Posterior vena cava (tissue), 2 donors: ENCODE measurements at regions of chr20 and their contacts with region 1.

Region 1: DNA sequence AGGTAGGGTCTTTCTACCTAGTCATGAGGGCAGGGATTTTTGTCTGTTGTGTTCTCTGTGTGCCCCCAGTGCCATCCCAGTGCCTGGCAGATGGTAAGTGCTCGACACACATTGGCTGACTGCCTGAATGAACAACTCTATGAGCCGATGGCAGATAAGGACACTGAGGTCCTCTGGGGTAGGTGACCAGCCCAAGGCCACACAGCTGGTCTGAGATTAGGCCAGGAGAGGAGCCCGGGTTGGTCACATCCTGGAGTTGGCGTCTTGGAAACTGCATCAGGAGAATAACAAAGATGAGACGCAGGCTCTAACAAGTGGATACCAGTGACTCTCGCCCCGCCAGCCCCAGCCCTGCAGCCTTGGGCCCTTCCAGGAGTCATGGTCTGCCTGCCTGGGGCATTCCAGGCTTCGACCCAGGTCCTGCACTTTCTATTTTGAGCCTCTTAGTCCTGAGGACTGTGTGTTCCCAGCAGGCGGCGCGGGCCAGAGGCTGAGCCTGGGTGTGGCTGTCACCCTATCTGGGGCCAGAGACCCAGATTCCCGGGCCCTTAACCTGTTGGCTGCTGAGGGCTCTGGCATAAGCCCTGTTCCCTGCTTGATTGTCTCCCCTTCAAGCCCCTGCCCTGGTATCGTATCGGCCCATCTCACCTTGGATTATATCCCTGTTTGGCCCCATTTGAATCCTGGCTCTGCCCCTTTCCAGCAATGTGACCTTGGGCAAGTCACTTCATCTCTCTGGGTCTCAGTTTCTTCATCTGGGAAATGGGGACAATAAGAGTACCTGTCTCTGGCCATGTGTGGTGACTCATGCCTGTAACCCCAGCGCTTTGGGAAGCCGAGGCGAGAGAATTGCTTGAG is 88.3 kb downstream of the CEBPB start:
- DNase-seq: peak; percentile 93

Region 2: GRCh38 chr20:50224531-50225255 is 54.2 kb before region 1 on chr20:
- intact Hi-C with region 1: loop called in 1 of 2 experiments (anchors 10 kb)
- DNase-seq: peak; percentile 95

Region 3: DNA sequence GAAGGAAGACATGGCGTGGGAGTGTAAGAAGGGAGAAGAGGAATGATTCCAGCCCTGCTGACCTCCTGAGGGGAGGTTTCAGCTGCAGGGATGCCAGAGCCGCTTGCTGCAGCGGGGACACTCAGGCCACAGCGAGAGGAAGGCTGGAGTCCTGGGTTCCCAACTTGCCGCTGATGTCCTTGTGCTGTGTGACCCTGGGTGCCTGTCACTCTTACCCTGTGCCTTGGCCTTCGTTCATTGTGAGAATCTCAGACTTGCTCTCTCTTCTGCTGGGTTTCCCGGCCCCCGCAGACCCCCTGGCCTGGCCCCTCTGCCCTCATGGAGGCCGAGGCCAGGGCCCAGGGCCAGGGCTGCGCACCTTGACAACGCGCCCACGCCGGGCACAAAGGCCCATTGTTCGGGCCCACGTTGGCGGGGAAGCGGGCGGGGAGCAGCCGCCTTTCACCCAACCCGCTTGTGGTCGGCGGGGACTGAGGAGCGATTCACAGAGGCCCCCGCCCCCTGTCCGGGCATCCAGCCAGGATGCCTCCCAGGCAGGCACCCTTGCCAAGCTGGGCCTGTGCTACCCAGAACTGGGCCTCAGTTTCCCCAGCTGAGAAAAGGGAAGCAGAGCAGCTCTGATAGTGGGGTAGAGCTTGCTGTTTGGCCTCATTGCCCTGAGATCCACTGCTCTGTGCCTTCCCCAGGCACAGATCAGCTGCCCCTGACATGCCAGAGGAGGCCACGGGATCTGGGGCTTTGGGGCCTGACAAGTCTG is 35.9 kb before region 1 on chr20:
- intact Hi-C with region 1: no loop called
- DNase-seq: no peak

Region 4: DNA sequence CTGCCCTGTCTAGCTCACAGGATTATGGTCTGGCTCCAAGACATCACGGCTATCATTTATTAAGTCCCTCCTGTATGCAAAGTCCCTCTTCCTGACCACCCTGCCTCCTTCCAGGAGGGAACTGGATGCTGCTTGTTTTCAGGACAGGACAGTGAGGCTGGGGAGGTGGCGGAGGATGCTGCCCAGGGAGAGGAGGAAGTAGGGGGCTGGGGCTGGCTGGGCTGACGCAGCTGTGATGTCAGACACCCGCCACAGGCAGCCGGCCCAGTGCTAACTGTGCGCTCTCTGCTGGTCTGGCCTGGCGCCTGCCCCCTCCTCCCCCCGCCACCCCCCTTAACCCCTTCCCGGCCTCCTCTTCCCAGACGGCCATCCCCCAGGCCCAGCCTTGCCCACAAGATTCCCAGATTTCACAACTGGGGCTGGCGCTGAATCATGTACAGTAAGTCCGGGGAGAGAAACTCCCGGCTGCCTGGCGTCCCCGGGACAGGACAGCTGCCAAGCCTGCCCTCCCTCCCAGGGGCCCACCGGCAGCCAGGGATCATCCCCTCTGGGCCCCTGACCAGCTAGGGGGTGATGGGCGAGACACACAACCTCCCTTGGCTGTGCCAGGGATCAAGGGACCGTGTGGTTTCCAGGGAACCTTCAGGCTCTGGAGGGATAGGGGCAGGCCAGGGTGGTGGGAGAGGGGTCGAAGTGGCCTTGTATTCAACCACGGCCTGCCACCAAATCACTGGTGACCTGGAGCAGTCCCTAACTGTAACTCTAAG is 29.8 kb after region 1 on chr20:
- intact Hi-C with region 1: loop called in 1 of 2 experiments (anchors 5 kb)
- DNase-seq: peak; percentile 98

Region 5: DNA sequence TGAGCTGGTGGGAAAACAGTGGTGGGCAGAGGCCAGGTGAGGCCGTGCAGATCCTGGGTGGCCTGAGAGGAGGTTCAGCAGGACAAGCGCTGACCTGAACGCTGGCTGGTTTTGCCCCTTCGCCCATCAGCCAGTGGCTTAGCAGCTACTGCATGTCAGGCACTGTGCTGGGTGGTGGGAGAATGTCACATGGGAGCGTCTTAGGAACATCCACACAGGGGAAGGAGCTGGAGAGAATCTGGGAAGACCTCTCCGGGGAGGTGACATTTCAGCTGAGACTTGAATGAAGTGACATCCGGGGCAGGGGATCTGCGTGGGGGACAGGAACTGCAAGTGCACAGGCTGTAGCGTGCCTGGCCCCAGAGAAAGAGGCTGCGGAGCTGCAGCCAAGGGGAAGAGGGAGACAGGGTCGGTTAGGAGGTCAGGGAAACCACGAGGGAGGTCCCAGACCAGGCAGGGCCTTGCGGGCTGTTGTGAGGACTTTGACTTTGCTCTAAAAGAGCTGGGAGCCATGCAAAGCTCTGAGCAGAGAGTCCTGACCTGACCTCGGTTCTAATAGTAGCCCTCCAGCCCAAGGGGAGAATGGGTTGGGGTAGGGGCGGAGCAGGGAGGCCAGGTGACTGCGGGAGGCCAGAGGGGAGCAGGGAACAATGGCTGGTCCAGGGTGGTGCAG is 74.5 kb after region 1 on chr20:
- intact Hi-C with region 1: no loop called
- DNase-seq: no peak

Region 6: DNA sequence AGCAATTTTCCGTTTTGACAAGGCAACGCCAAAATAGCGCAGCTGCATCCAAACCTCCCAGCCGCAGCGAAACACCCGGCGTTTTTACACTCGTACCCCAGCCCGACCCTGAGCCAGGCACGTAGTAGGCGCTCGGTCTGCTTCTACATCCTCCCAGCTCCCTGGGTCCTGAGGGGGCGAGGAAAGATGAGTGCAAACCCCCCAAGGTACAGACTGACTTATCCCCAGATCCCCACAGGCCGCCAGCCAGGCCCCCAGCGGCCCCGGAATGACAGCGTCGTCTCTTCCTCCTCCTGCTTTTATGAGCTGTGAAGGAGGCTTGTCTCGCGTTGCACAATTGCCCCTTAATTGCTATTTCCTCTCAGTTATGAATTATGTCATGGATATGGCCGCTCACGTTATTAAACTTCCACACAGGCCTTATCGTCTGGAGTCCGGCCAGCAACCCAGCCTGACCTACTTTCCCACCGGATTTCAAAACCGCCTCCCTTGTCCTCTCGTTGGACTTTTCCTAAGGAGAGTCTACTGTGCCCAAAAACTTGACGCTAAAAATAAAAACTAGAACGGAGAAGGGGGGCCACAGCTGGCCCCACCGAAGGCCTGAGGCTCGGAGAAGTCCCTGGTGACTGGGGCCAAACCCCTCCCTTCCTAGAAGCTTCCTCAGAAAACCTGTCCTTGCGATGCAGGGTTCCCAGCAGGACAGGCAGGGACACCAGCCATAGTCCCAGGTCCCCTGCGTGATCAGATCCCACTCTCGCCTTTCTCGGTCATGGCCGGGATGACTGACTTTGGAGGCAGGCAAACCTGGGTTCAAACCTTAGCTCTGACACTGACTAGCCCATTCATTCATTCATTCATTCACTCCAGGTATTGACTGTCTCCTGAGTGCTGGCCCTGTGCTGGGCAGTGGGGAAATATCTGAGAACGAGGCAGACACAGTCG is 100.4 kb after region 1 on chr20:
- intact Hi-C with region 1: loop called in 1 of 2 experiments (anchors 5 kb)
- DNase-seq: peak; percentile 96

Region 7: DNA sequence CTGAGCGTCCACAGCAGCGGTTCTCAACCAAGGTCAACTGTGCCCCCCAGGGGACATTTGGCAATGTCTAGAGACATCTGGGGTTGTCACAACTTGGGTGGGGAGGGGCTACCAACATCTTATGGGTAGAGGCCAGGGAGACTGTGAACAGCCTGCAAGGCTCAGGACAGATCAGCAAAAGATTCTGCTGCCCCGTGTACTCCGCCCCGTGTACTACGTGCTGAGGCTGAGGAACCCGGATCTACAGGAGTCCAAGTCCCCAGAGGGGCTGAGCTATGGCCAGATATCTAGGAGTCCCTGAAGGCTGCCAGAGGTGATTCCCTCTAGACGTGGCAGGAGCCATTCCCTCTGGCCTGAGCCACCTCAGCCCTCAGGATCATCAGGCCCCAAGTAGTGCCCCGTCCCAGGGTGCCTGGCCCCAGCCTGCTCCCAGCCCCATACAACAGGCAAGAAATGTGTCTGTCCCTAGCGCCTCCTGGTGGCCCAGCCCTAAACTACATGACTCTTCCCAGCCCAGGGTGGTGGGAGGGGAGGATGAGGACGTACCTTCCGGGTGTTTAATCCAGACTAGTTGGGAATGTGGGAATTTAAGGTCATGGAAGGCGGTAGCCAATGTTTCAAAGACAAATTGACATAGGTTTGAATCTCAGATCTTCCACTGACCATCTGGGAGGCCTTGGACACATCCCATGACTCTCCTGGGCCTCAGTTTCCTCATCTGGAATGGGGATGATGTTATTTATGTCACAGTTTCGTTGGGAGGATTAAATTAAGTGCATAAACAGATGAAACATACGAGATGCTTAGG is 181.8 kb after region 1 on chr20:
- intact Hi-C with region 1: loop called in 1 of 2 experiments (anchors 10 kb)
- DNase-seq: peak; percentile 97